Dendritic cell treated with granulocyte-macrophage colony-stimulating factor and Interleukin-4, amounts not matched to agents 40 ng/mL and 50 ng/mL, for 4 days (primary cell): ENCODE measurements at regions of chr6 and their contacts with region 1.

Region 1: DNA sequence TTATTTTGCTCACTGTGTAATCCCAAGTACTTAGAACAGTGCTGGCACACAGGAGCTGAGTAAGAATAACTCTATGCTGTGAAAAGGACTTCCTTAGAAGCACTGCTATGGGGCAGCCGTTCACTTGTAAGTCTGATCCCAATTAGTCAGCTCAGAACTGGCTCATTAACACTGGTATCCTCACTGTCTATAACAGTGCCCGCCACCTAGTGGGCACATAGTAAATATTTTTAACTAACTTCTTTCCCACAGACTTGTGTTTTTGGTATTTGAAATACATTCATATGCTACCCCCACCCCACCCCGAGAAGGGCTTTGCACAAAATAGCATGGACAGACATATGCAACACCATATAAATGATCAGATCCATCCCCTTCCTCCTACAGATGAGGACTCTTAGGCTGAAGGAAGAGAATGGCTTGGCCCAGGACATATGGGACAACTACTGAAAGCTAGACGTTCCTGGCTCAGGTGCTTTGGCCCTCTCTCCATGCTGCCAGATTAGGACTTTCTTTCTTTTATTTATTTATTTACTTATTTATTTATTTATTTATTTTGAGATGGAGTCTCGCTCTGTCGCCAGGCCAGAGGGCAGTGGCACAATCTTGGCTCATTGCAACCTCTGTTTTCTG is 47.1 kb downstream of the DST start:
- H3K4me3 Mint-ChIP-seq: no peak overlapping the region
- H3K27ac Mint-ChIP-seq: no peak overlapping the region
- H3K4me1 Mint-ChIP-seq: peaks cover 29% of the 10 kb centered on the region
- H3K27me3 Mint-ChIP-seq: no peaks in the 10 kb centered on the region

Region 2: GRCh38 chr6:55980627-55981211 is 614.9 kb before region 1 on chr6:
- intact Hi-C with region 1: loop called (anchors 5 kb)
- H3K4me3 Mint-ChIP-seq: no peak overlapping the region
- H3K27ac Mint-ChIP-seq: no peak overlapping the region
- H3K4me1 Mint-ChIP-seq: no peaks in the 10 kb centered on the region
- H3K27me3 Mint-ChIP-seq: peaks cover 3% of the 10 kb centered on the region

Region 3: DNA sequence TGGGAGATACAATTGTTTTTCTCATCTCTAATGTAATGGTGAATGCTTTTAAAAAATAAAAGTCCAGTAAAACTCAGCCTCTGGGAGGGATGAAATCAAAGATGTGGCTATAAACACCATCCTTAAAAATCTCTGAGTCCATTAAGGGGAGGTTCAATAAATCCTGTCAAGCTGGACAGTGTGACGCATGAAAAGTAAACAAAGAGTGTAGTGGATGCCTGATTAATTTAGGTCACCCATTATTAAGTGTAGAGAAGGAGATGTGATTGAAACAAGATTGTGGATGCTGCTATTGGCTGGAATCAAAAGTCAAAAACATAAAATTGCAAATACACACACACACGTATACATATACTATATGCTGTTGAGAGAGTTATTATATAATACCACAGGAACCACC is 464.2 kb before region 1 on chr6:
- intact Hi-C with region 1: loop called (anchors 5 kb)
- H3K4me3 Mint-ChIP-seq: no peak overlapping the region
- H3K27ac Mint-ChIP-seq: no peak overlapping the region
- H3K4me1 Mint-ChIP-seq: peaks cover 8% of the 10 kb centered on the region
- H3K27me3 Mint-ChIP-seq: no peaks in the 10 kb centered on the region

Region 4: GRCh38 chr6:56542364-56543331 is 53.0 kb before region 1 on chr6:
- intact Hi-C with region 1: loop called (anchors 5 kb)
- H3K4me3 Mint-ChIP-seq: no peak overlapping the region
- H3K27ac Mint-ChIP-seq: no peak overlapping the region
- H3K4me1 Mint-ChIP-seq: peaks cover 5% of the 10 kb centered on the region
- H3K27me3 Mint-ChIP-seq: no peaks in the 10 kb centered on the region